CD4-positive, alpha-beta memory T cell (primary cell): ENCODE measurements at regions of chr6 and their contacts with region 1.

Region 1: GRCh38 chr6:32984605-32985389 is 16.4 kb downstream of the BRD2 start:
- DNase-seq: peak; percentile 83 to 88 (median 84)
- H3K4me3 ChIP-seq: no peak overlapping the region
- H3K4me3 Mint-ChIP-seq: no peak overlapping the region
- H3K27ac ChIP-seq: no peak overlapping the region
- H3K27ac Mint-ChIP-seq: peak overlapping the region; percentile 3 to 82 (median 45)
- H3K4me1 ChIP-seq: peaks cover 9% of the 10 kb centered on the region
- H3K4me1 Mint-ChIP-seq: peaks cover 18 to 34% (median 21%) of the 10 kb centered on the region in 4 donors
- H3K27me3 ChIP-seq: no peaks in the 10 kb centered on the region
- H3K27me3 Mint-ChIP-seq: no peaks in the 10 kb centered on the region

Region 2: GRCh38 chr6:32843979-32844838 is 140.6 kb before region 1 on chr6 and contains the start of gene PSMB8:
- CTCF ChIA-PET with region 1: interaction called, 28 read pairs
- POLR2A ChIA-PET with region 1: interaction called, 549 read pairs
- intact Hi-C with region 1: no loop called
- DNase-seq: peak; percentile 97 to 100 (median 98)
- H3K4me3 ChIP-seq: peak within 1 kb of the TSS; percentile 89 to 98
- H3K4me3 Mint-ChIP-seq: peak within 1 kb of the TSS; percentile 94 to 100 (median 97)
- H3K27ac ChIP-seq: peak within 1 kb of the TSS; percentile 99
- H3K27ac Mint-ChIP-seq: peak within 1 kb of the TSS; percentile 99 to 100 (median 99)
- H3K4me1 ChIP-seq: peaks cover 81% of the 10 kb centered on the region
- H3K4me1 Mint-ChIP-seq: peaks cover 61 to 98% (median 72%) of the 10 kb centered on the region in 4 donors
- H3K27me3 ChIP-seq: no peaks in the 10 kb centered on the region
- H3K27me3 Mint-ChIP-seq: no peaks in the 10 kb centered on the region
- total RNA-seq, gene PSMB8: 134 to 138 TPM

Region 3: GRCh38 chr6:32879691-32880090 is 105.1 kb before region 1 on chr6:
- CTCF ChIA-PET with region 1: interaction called, 120 read pairs
- POLR2A ChIA-PET with region 1: interaction called, 15 read pairs
- intact Hi-C with region 1: no loop called
- DNase-seq: no peak
- H3K4me3 ChIP-seq: no peak overlapping the region
- H3K4me3 Mint-ChIP-seq: no peak overlapping the region
- H3K27ac ChIP-seq: no peak overlapping the region
- H3K27ac Mint-ChIP-seq: no peak overlapping the region
- H3K4me1 ChIP-seq: no peaks in the 10 kb centered on the region
- H3K4me1 Mint-ChIP-seq: no peaks in the 10 kb centered on the region
- H3K27me3 ChIP-seq: no peaks in the 10 kb centered on the region
- H3K27me3 Mint-ChIP-seq: no peaks in the 10 kb centered on the region

Region 4: GRCh38 chr6:32894080-32895005 is 90.5 kb before region 1 on chr6:
- CTCF ChIA-PET with region 1: interaction called, 50 read pairs
- POLR2A ChIA-PET with region 1: interaction called, 186 read pairs
- intact Hi-C with region 1: loop called (anchors 2 kb)
- DNase-seq: peak; percentile 91 to 97 (median 91)
- H3K4me3 ChIP-seq: peak overlapping the region; percentile 78 to 90
- H3K4me3 Mint-ChIP-seq: peak overlapping the region; percentile 99 to 100 (median 100)
- H3K27ac ChIP-seq: peak overlapping the region; percentile 84
- H3K27ac Mint-ChIP-seq: peak overlapping the region; percentile 93 to 99 (median 98)
- H3K4me1 ChIP-seq: peaks cover 21% of the 10 kb centered on the region
- H3K4me1 Mint-ChIP-seq: peaks cover 14 to 45% (median 26%) of the 10 kb centered on the region in 4 donors
- H3K27me3 ChIP-seq: no peaks in the 10 kb centered on the region
- H3K27me3 Mint-ChIP-seq: no peaks in the 10 kb centered on the region

Region 5: DNA sequence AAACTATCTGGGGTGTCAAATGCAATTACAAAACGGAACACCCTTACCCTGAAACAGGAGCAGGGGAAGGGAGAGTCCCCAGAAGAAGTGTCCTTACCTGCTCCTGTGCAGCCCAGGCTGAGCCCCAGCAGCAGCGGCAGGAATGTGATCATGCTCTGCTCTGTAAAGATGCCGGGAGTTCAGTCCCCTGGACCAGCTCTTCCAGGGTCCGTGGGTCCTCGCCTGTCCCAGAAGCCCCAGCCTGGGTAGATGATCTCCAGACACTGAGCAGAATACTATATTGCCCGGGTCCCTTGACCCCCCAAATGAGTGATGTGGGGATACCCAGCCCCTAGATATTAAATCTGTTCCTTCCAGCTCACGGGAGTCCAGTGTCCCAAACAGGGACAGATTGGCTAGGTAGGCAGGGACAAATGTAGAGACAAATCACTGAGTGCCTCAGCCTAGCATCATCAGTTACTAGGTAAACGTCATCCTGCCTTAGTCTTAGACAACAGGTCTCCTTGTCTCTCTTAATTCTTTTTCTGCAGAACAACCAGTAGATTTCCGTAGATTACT is 44.1 kb before region 1 on chr6 and contains the start of gene HLA-DMB:
- CTCF ChIA-PET with region 1: interaction called, 631 read pairs
- POLR2A ChIA-PET with region 1: interaction called, 698 read pairs
- intact Hi-C with region 1: loop called (anchors 2 kb)
- DNase-seq: peak; percentile 68 to 82 (median 70)
- H3K4me3 ChIP-seq: peak within 1 kb of the TSS; percentile 57 to 73
- H3K4me3 Mint-ChIP-seq: peak within 1 kb of the TSS; percentile 89 to 97 (median 92)
- H3K27ac ChIP-seq: peak within 1 kb of the TSS; percentile 68
- H3K27ac Mint-ChIP-seq: peak within 1 kb of the TSS; percentile 90 to 99 (median 94)
- H3K4me1 ChIP-seq: peaks cover 57% of the 10 kb centered on the region
- H3K4me1 Mint-ChIP-seq: peaks cover 46 to 60% (median 53%) of the 10 kb centered on the region in 4 donors
- H3K27me3 ChIP-seq: no peaks in the 10 kb centered on the region
- H3K27me3 Mint-ChIP-seq: no peaks in the 10 kb centered on the region
- total RNA-seq, gene HLA-DMB: 7.9 to 8.1 TPM

Region 6: GRCh38 chr6:32964776-32965175 is 20.0 kb before region 1 on chr6:
- CTCF ChIA-PET with region 1: interaction called, 537 read pairs
- POLR2A ChIA-PET with region 1: interaction called, 615 read pairs
- intact Hi-C with region 1: no loop called
- DNase-seq: no peak
- H3K4me3 ChIP-seq: no peak overlapping the region
- H3K4me3 Mint-ChIP-seq: no peak overlapping the region
- H3K27ac ChIP-seq: no peak overlapping the region
- H3K27ac Mint-ChIP-seq: peak overlapping the region; percentile 61 to 100 (median 67)
- H3K4me1 ChIP-seq: peaks cover 61% of the 10 kb centered on the region
- H3K4me1 Mint-ChIP-seq: peaks cover 42 to 69% (median 53%) of the 10 kb centered on the region in 4 donors
- H3K27me3 ChIP-seq: no peaks in the 10 kb centered on the region
- H3K27me3 Mint-ChIP-seq: no peaks in the 10 kb centered on the region